ENCODE measurements at regions of chr2 and their contacts with region 1.

Region 1: DNA sequence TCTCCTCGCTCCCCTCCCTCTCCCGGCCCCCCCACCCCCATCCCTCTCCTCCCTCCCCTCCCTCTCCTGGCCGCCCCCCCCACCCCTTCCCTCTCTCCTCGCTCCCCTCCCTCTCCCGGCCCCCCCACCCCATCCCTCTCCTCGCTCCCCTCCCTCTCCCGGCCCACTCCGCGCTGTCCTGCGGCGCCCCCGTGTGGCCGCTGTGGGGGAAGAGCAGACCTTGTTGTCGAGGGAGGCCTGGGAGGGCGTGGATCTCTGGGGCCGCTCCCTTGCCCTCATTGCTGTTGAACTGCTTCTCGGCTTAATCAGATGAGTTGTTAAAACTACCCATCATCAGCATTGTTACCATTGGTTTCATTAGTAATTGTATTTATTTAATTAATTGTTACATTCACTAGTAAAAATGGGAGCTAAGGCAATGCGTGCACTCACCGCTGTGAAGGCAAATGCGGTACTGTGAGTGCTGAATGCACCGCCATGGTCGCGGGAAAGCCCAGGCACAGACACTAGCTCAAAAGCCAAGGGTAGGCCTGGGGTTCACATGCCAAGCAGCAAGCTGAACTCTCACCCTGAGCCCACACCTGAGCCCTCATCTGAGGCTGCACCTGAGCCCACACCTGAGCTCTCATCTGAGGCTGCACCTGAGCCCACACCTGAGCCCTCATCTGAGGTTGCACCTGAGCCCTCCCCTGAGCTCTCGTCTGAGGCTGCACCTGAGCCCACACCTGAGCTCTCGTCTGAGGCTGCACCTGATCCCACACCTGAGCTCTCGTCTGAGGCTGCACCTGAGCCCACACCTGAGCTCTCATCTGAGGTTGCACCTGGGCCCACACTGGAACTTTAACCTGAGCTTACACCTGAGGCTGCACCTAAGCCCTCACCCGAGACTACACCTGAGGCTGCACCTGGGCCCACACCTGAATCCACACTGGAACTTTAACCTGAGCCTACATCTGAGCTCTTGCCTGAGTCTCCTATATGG is 8.8 kb downstream of the RTP5 start:
- DNase-seq: peak; percentile 79
- ATAC-seq: no peak
- H3K4me3 ChIP-seq: no peak overlapping the region
- H3K4me3 Mint-ChIP-seq: no peak overlapping the region
- H3K27ac ChIP-seq: no peak overlapping the region
- H3K27ac Mint-ChIP-seq: peak overlapping the region; percentile 53
- H3K4me1 ChIP-seq: peaks cover 19 to 30% of the 10 kb centered on the region in 2 donors
- H3K4me1 Mint-ChIP-seq: peaks cover 32% of the 10 kb centered on the region
- H3K27me3 ChIP-seq: no peaks in the 10 kb centered on the region
- H3K27me3 Mint-ChIP-seq: no peaks in the 10 kb centered on the region
- CTCF ChIP-seq: peak; percentile 64

Region 2: GRCh38 chr2:240851078-240851991 is 1026.9 kb before region 1 on chr2:
- CTCF ChIA-PET with region 1: interaction called, 3 read pairs
- POLR2A ChIA-PET with region 1: no interaction called
- intact Hi-C with region 1: loop called (anchors 2 kb)
- DNase-seq: peak; percentile 84
- ATAC-seq: peak; percentile 85
- H3K4me3 ChIP-seq: no peak overlapping the region
- H3K4me3 Mint-ChIP-seq: no peak overlapping the region
- H3K27ac ChIP-seq: no peak overlapping the region
- H3K27ac Mint-ChIP-seq: no peak overlapping the region
- H3K4me1 ChIP-seq: no peaks in the 10 kb centered on the region
- H3K4me1 Mint-ChIP-seq: no peaks in the 10 kb centered on the region
- H3K27me3 ChIP-seq: peaks cover 0 to 2% (median 0%) of the 10 kb centered on the region in 4 experiments
- H3K27me3 Mint-ChIP-seq: no peaks in the 10 kb centered on the region
- CTCF ChIP-seq: peak; percentile 95

Region 3: DNA sequence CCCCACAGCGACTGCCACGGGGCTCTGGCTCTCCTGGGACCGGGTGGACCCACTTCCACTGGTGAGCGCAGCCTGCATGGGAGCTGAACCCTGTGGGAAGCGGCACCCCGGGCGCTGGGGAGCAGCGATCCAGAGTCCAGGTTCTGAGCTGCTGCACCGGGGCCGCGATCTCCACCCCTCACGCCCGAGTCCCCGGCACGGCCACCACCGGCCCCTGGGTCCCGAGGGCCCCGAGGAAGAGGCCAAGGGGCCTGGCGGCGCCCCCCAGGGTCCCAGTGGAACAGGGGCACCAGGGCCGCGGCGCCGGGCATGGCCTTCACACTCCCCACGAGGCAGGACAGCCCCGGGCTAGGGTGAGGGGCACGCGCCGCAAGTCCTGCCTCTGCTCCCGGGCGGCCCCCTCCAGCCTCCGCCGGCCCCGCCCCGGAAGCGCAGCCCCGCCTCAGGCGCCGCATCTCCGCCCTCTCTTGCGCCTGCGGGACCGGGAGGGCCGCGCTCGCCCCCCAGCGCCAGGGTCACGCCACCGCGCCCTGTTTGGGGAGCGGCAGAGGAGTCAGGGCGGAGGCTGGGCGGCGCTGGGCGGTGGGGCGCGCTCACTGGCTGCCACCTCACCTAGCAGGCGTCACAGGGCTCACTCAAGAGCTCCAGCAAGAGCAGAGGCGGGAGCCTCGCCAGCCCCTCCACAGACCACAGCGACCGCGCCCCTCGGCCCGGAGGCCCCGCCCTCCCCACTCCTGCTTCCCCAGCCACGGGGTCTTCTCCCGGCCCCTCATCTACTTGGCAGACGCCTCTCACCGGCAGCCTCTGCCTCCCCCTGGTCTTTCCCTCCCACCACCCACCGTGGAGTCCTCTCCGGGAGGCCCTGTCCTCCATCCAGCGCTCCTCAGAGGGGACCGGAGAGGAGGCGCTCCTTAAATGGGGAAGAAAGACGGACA is 268.2 kb before region 1 on chr2:
- CTCF ChIA-PET with region 1: no interaction called
- POLR2A ChIA-PET with region 1: no interaction called
- intact Hi-C with region 1: loop called (anchors 1 kb)
- DNase-seq: peak; percentile 93
- ATAC-seq: peak; percentile 99
- H3K4me3 ChIP-seq: peak overlapping the region in 4 of 5 experiments; percentile 50 to 71 (median 62)
- H3K4me3 Mint-ChIP-seq: peak overlapping the region; percentile 66
- H3K27ac ChIP-seq: peak overlapping the region; percentile 50 to 74
- H3K27ac Mint-ChIP-seq: peak overlapping the region; percentile 63
- H3K4me1 ChIP-seq: peaks cover 8 to 16% of the 10 kb centered on the region in 2 donors
- H3K4me1 Mint-ChIP-seq: peaks cover 20% of the 10 kb centered on the region
- H3K27me3 ChIP-seq: no peaks in the 10 kb centered on the region
- H3K27me3 Mint-ChIP-seq: no peaks in the 10 kb centered on the region
- CTCF ChIP-seq: peak; percentile 76

Region 4: GRCh38 chr2:241686649-241687425 is 191.4 kb before region 1 on chr2 and contains the start of gene DTYMK:
- CTCF ChIA-PET with region 1: interaction called, 4 read pairs
- POLR2A ChIA-PET with region 1: no interaction called
- intact Hi-C with region 1: loop called (anchors 1 kb)
- DNase-seq: peak; percentile 97
- ATAC-seq: peak; percentile 95
- H3K4me3 ChIP-seq: peak within 1 kb of the TSS; percentile 71 to 91 (median 82)
- H3K4me3 Mint-ChIP-seq: peak within 1 kb of the TSS; percentile 84
- H3K27ac ChIP-seq: peak within 1 kb of the TSS; percentile 61 to 91
- H3K27ac Mint-ChIP-seq: peak within 1 kb of the TSS; percentile 68
- H3K4me1 ChIP-seq: peaks cover 8 to 19% of the 10 kb centered on the region in 2 donors
- H3K4me1 Mint-ChIP-seq: peaks cover 26% of the 10 kb centered on the region
- H3K27me3 ChIP-seq: no peaks in the 10 kb centered on the region
- H3K27me3 Mint-ChIP-seq: no peaks in the 10 kb centered on the region
- CTCF ChIP-seq: no peak
- total RNA-seq, gene DTYMK: 20.7 and 26.3 TPM in 2 replicates

Region 5: DNA sequence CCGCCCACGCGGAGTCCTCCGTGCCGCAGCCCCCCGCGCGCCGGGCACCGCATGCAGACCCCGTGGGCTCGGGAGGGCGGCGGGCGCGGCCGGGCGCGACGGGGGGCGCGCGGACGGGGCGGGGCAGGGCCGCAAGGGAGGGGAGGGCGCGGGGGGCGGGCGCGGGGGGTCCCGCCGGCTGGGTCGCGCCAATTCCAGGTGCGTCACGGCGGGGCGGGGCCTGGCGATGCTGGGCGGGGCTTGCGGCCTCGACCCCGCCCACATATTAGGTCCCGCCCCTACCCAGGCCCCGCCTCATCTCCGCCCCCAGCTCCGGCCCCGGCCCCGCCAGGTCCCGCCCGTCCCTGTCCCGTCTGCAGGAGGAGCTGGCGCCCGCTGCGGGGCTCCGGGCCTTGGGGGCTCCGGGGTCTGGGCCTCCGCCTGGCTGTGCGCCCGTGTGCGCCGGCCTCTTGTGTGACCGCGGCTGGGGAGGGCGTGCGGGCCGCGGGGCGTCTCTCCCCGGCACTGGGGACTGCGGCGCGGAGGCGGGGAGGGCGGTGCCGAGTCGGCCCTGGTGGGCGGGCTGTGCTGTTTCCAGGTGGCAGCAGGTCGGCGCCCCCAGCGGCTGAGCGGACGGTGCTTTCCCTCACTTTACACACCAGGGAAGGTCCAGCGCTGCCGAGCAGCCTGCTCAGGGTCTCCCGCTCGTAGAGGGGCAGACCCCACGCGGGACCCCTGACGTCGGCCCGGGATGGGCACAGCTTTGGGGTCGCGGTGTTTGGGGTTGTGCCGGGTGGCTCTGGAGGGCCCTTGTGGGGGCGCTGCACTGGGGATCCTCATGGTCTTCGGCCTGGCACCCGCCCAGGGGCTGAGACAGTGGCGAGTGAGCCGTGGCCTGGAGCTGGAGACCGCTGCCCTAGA is 175.9 kb before region 1 on chr2:
- CTCF ChIA-PET with region 1: interaction called, 8 read pairs
- POLR2A ChIA-PET with region 1: interaction called, 12 read pairs
- intact Hi-C with region 1: loop called (anchors 1 kb)
- DNase-seq: peak; percentile 96
- ATAC-seq: peak; percentile 75
- H3K4me3 ChIP-seq: peak overlapping the region; percentile 15 to 80 (median 74)
- H3K4me3 Mint-ChIP-seq: peak overlapping the region; percentile 83
- H3K27ac ChIP-seq: peak overlapping the region; percentile 65 to 89
- H3K27ac Mint-ChIP-seq: peak overlapping the region; percentile 86
- H3K4me1 ChIP-seq: peaks cover 14 to 21% of the 10 kb centered on the region in 2 donors
- H3K4me1 Mint-ChIP-seq: peaks cover 20% of the 10 kb centered on the region
- H3K27me3 ChIP-seq: no peaks in the 10 kb centered on the region
- H3K27me3 Mint-ChIP-seq: no peaks in the 10 kb centered on the region
- CTCF ChIP-seq: peak; percentile 74

Region 6: DNA sequence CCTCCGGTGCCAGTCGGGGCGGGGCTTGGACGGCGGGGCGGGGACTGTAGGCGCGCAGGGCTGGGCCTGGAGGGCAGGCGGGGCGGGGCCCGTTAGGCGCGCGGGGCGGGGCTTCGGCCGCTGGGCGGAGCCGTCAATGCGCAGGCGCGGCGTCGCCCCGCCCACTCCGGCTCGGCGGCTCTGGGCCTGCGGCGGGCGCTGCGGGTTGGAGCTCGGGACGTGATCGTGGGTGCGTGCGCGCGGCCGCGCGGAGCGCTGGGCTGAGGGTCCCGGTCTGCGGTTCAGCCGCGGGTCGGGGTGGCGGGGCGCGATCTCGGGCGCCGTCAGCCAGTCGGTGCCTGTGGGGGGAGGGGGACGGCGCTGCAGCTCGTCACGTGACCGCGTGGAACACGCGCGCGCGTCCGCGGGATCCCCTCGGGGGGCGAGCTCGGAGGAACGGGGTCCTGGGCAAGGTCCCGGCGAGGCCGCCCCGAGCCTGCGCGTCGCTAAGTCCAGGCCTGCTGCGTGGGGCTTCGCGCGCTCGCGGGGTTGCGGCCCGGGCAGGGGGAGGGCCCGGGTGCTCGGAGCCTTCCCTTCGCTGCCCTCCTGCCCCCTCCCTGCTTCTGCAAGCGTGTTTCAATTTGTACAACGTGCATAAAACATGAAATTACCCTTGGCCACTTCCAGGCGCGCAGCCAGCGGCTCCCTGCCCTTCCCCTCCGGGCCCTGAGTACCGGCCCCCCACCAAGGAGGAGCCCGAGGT is 143.6 kb before region 1 on chr2 and contains the start of gene D2HGDH:
- CTCF ChIA-PET with region 1: interaction called, 15 read pairs
- POLR2A ChIA-PET with region 1: no interaction called
- intact Hi-C with region 1: loop called (anchors 1 kb)
- DNase-seq: peak; percentile 93
- ATAC-seq: peak; percentile 96
- H3K4me3 ChIP-seq: peak within 1 kb of the TSS; percentile 5 to 94 (median 83)
- H3K4me3 Mint-ChIP-seq: peak within 1 kb of the TSS; percentile 92
- H3K27ac ChIP-seq: peak within 1 kb of the TSS; percentile 40 to 84
- H3K27ac Mint-ChIP-seq: peak within 1 kb of the TSS; percentile 81
- H3K4me1 ChIP-seq: peaks cover 4 to 30% of the 10 kb centered on the region in 2 donors
- H3K4me1 Mint-ChIP-seq: peaks cover 38% of the 10 kb centered on the region
- H3K27me3 ChIP-seq: no peaks in the 10 kb centered on the region
- H3K27me3 Mint-ChIP-seq: no peaks in the 10 kb centered on the region
- CTCF ChIP-seq: no peak
- total RNA-seq, gene D2HGDH: 57.1 and 67.7 TPM in 2 replicates

Region 7: DNA sequence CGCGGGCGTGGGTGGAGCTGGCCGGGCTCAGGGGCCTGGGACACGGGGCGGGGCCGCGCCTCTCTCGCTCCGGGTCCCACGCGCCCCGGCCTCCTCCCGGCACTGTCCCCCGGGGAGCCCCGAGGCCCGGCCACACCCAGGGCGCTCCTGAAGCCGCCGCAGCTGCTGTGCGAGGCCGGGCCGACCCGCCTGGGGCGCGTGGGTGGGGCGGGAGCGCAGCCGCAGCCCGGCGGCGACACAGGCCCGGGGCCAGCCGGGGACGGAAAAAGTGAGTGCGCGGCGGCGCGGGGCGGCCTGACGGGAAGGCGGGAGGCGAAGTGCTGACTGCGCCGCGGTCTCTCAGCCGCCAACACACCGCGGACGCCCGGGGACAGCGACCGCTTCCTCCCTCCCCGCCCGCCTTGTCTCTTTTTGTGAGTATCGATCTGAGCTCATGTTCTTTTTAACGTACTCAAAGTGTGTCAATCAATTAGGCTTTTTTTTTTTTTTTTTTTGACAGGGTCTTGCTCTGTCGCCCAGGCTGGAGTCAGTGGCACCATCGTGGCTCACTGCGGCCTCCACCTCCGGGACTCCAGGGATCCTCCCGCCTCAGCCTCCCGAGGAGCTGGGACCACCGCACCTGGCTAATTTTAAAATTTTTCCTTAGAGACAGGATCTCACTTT is 34.1 kb before region 1 on chr2:
- CTCF ChIA-PET with region 1: interaction called, 4 read pairs
- POLR2A ChIA-PET with region 1: no interaction called
- intact Hi-C with region 1: loop called (anchors 5 kb)
- DNase-seq: peak; percentile 79
- ATAC-seq: peak; percentile 90
- H3K4me3 ChIP-seq: peak overlapping the region; percentile 19 to 52 (median 39)
- H3K4me3 Mint-ChIP-seq: peak overlapping the region; percentile 84
- H3K27ac ChIP-seq: peak overlapping the region in 1 of 2 donors; percentile 30
- H3K27ac Mint-ChIP-seq: peak overlapping the region; percentile 73
- H3K4me1 ChIP-seq: peaks cover 18 to 26% of the 10 kb centered on the region in 2 donors
- H3K4me1 Mint-ChIP-seq: peaks cover 31% of the 10 kb centered on the region
- H3K27me3 ChIP-seq: no peaks in the 10 kb centered on the region
- H3K27me3 Mint-ChIP-seq: no peaks in the 10 kb centered on the region
- CTCF ChIP-seq: peak; percentile 32

Region 8: DNA sequence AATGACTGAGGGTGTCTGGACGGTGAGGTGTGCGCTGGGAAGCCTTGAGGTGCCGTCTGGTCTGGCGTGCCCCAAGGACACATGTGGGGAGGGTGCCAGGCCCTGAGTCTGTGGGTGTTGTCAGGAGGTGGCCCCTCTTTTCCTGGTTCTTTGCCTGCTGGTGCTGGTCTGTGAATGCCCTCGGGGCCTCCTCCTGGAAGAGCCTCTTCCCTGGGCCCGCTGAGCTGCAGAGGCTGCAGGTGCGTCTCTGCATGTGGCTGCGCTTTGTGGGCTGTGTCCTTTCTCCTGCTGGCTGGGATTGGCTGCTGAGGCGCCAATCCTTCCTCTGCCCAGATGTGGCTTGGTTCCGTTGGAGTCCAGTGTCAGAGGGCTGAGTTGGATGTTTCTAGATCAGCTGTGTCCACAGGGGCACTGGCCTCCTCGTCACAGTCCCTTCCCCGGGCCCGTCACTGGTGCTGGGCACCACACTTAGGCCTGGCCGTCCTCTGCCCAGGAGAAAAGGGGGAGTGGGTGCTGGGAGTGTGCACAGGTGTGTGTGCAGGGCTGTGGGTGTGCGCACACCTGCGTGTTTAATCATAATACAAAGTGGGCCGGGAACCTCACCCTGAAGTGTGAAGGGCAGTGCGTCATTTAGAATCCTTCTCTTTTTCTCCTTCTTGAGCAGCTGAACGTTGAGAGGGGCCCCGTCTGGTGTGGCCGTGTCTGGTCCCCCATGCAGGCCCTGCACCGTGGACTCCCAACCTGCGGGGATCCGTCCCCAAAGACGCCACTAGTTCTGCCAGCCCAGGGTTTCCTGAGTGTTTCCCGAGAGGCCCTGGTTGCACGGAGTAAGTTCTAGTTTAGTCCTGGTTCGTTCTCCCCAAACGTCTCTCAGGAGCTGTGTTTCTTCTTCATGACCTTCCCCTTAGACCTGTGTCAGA is 26.8 kb after region 1 on chr2:
- CTCF ChIA-PET with region 1: no interaction called
- POLR2A ChIA-PET with region 1: no interaction called
- intact Hi-C with region 1: no loop called
- DNase-seq: no peak
- ATAC-seq: no peak
- H3K4me3 ChIP-seq: no peak overlapping the region
- H3K4me3 Mint-ChIP-seq: no peak overlapping the region
- H3K27ac ChIP-seq: no peak overlapping the region
- H3K27ac Mint-ChIP-seq: no peak overlapping the region
- H3K4me1 ChIP-seq: peaks cover 0 to 6% of the 10 kb centered on the region in 2 donors
- H3K4me1 Mint-ChIP-seq: peaks cover 6% of the 10 kb centered on the region
- H3K27me3 ChIP-seq: no peaks in the 10 kb centered on the region
- H3K27me3 Mint-ChIP-seq: no peaks in the 10 kb centered on the region
- CTCF ChIP-seq: no peak

Measured in B cell (primary cell).